ENCODE measurements at regions of chr3 and their contacts with region 1.

Region 1: DNA sequence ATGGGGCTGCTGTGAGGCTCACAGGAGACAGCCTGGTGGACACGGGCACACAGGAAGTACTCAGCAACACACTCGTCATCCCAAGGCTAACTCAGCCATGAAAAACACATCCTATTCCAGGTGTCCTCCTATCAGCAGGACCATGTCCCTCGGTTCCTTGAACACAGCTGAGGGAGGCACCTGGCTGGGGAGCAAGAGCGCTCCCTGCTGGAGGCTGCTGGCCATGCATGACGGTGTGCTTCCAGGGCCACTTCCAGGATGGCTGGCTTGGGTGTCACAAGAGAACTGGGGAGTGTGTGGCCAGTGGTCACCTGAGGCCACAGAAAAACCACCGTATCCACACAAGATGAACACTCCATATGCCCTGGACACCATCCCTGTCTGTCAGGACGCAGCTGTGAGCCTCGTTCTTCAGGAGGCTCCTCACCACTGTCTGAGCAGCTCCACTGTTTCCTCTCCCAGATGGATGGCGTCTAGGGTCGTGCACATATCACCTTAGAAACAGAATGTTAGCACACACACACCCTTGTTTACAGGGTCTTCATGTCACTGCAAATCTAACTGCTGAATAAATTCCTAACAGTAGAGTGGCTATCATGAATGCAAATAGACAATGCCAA is 31.0 kb downstream of the POC1A start:
- DNase-seq: peak; percentile 60 to 92 (median 82)
- ATAC-seq: peak; percentile 91 to 97 (median 92)
- H3K4me3 ChIP-seq: no peak overlapping the region
- H3K27ac ChIP-seq: no peak overlapping the region
- H3K4me1 ChIP-seq: no peaks in the 10 kb centered on the region
- H3K27me3 ChIP-seq: no peaks in the 10 kb centered on the region
- CTCF ChIP-seq: peak; percentile 88 to 96 (median 88)

Region 2: DNA sequence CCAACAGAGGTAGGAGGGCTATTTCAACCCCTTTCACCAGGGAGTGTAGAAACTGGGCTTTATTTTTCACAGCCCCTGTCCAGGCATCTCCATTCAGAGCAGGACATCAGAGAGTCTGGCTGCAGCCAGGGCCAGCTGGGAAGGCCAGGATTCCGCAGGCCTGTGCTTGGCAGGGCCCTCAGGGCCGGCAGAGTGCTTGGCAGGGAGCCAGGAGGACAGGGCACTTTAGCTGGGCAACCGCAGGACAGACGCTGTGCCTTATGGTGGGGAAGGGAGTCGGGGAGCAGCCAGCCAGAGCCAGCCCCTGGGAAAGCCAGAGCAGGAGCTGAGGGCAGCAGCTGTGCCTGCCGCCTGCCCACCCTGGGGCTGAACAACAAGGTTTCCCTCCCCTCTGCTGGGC is 309.7 kb before region 1 on chr3:
- intact Hi-C with region 1: no loop called
- DNase-seq: peak in 4 of 6 donors; percentile 16 to 68 (median 52)
- ATAC-seq: no peak
- H3K4me3 ChIP-seq: no peak overlapping the region
- H3K27ac ChIP-seq: no peak overlapping the region
- H3K4me1 ChIP-seq: no peaks in the 10 kb centered on the region
- H3K27me3 ChIP-seq: no peaks in the 10 kb centered on the region
- CTCF ChIP-seq: no peak

Region 3: DNA sequence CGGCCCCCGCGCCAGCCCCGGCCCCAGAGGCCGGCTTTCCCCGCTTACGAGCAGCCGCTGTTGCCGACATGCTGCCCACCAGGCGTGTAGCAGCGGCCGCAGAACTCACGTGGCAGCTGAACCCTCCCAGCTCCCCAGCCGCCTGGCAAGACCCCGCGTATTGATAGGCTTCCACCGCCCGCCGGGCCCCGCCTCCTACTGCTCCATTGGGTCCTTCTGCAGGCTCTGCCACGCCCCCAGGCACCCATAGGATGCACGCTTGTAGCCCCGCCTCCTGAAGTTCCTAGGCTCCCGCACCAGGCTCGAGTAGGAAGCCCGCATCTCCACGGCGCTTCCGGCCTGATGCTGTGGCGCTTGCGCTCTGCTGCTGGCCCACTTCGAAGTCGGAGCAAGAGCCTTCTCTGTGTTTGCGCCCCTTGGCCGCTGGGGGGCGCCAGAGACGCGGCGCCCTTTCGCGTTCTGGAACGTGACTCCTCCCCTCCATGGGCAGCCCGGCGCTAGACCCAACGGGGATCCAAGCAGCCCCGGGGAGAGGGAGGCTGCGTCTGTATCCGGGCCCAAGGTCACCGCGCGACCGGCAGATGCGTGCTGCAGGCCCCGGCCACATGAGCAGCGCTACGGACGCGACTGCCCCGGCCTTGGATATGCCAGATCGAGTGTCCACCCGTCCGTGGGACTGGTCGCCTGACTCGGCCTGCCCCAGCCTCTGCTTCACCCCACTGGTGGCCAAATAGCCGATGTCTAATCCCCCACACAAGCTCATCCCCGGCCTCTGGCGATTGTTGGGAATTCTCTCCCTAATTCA is 181.2 kb before region 1 on chr3 and contains the starts of genes PARP3 and RRP9:
- intact Hi-C with region 1: loop called in 1 of 3 experiments (anchors 10 kb)
- DNase-seq: peak; percentile 96 to 100 (median 100)
- ATAC-seq: peak; percentile 95 to 97 (median 96)
- H3K4me3 ChIP-seq: peak within 1 kb of the TSS; percentile 52 to 94 (median 64)
- H3K27ac ChIP-seq: peak within 1 kb of the TSS; percentile 40 to 83 (median 71)
- H3K4me1 ChIP-seq: peaks cover 0 to 18% (median 5%) of the 10 kb centered on the region in 3 donors
- H3K27me3 ChIP-seq: no peaks in the 10 kb centered on the region
- CTCF ChIP-seq: peak; percentile 100
- total RNA-seq, gene PARP3: 2.1 to 5.9 (median 4.2) TPM
- total RNA-seq, gene RRP9: 3.8 to 9.0 (median 7.0) TPM

Region 4: DNA sequence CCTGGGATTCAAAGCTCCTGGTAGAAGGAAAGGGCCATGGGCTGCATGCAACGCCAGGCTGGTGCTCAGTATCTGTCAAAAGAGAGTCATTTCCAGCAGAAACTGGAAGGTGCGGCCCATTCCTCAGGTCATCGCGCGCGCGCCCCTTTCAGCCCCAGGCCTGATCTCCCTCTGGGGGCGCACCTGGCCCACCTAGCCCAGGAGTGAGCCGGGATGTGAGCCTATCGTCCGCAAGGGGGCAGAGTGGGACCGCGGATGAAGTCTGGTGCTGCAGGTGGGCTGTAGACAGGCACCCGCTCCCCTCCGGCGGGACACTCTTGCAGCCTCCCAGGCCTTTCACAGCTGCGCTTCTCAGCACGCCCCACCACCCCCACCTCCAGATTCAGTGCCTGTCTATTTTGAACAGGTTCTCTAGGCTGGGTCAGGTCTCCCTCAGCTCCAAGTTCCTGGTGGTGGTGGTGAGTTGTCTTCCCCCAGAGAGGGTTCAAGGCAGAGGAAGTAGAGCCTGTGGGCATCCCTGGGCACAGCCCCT is 121.7 kb before region 1 on chr3:
- intact Hi-C with region 1: loop called in 1 of 3 experiments (anchors 5 kb)
- DNase-seq: peak; percentile 58 to 87 (median 75)
- ATAC-seq: peak; percentile 50 to 80 (median 79)
- H3K4me3 ChIP-seq: no peak overlapping the region
- H3K27ac ChIP-seq: no peak overlapping the region
- H3K4me1 ChIP-seq: peaks cover 4 to 11% (median 6%) of the 10 kb centered on the region in 3 donors
- H3K27me3 ChIP-seq: no peaks in the 10 kb centered on the region
- CTCF ChIP-seq: peak; percentile 79 to 83 (median 81)

Measured in pancreas (tissue), 10 donors.